AG04449 (cell line): ENCODE measurements at regions of chr1 and their contacts with region 1.

Region 1: GRCh38 chr1:89632657-89633247 is at the start of gene LRRC8C:
- DNase-seq: no peak
- H3K4me3 ChIP-seq: peak within 1 kb of the TSS; percentile 84
- CTCF ChIP-seq: peak; percentile 30

Region 2: DNA sequence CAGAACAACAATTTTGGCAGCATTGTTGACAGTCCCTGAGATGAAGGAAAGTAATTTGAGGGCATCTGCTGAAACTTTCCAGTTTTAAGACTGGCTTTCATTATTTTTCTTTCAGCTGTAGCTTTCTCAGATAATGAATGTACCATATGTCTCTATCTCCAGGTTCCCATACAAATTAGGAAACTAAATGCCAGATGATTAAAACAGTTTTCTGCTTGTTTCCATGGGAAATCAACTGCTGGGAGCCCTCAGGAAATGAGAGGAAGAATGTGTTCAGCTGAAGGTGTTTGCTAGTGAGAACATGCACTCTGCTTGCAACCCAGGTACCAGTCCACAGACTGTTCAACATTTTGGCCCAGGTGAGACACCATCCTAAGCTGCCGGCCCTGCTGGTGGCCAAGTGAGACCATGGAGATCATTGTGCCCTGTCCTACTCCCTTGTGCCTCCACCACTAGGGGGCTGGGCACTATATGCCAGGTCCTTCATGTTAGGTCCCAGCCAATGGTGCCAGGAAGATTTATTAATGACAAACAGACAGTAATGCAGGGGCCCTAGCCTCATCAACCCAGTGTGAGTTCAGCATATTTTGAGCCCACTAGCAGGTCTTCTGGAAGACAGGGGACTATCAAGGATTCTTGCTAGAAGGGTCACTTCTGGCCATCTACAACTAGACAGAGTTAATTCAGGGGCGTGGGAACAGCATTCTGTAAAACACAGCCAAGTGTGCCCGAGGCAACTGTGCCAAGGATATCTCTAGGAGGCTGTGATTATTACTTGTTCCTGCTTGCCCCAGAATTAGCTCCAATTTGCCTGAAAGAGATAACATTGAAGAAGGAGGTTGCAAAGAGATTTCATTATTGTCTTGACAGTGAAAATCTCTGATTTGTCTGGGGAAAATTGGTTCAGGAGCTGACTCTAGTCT is 16.8 kb before region 1 on chr1:
- CTCF ChIA-PET with region 1: interaction called, 13 read pairs
- POLR2A ChIA-PET with region 1: no interaction called
- DNase-seq: no peak
- H3K4me3 ChIP-seq: no peak overlapping the region
- CTCF ChIP-seq: no peak

Region 3: DNA sequence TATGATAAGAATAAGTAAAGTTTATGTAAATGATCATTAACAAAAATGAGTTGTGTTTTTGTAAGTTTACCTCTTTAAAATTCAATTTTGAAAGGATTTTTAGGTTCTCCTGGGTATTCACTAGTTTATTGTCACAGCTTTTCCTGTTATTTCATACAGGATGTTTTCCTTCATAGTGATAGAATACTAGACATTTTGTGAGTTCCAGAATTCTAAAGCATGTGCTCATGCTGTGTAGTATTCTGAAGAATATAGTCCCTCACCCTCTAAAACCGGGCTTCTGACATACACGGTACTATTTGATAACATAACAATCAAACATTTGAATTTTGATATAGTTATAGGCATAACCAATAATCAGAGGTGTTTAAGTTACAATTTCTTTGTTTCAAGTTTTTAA is 10.8 kb after region 1 on chr1:
- CTCF ChIA-PET with region 1: interaction called, 10 read pairs
- POLR2A ChIA-PET with region 1: no interaction called
- DNase-seq: no peak
- H3K4me3 ChIP-seq: no peak overlapping the region
- CTCF ChIP-seq: no peak

Region 4: DNA sequence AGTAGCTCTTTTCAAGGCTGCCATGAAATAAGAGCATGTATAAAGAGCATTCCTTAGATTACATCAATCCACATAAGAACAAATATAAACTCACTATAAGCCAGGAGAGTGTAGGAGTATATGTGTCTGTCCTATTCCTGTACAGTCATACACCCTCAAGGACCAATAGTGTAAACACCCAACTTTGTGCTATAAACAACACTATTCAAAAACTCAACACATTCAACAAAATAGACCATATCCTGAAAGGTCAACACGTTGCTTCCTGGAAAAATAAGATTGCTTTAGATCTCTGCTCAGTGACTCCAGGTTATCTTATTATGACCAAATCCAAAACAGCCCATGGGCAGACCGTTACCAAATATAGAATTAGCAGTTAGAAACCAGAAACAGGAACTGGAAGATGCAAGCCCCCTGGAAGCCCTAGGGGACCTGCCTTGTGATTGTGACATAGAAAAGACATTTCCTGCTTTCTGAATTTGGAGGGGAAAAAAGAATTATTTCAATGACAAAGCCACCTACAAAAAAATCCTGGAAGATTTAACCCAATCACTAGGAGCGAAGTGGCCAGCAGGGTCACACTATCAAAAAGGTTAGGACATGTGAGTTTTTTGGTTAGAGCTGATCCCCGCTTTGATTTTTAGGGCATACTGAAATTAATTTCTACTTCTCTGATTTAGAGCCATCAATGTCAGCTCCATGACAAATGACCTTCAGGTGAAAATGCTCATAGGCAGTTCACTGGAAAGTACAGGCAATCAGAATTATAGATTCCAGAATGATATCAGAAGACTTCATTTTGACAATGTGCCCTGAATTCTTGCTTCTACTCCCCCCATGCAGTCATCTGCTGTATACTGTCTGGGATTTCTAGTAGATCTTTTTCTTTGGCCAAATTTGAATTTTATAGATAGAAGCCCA is 60.1 kb after region 1 on chr1:
- CTCF ChIA-PET with region 1: no interaction called
- POLR2A ChIA-PET with region 1: no interaction called
- DNase-seq: no peak
- H3K4me3 ChIP-seq: no peak overlapping the region
- CTCF ChIP-seq: no peak